CD8-positive, alpha-beta T cell (primary cell): ENCODE measurements at regions of chr18 and their contacts with region 1.

Region 1: DNA sequence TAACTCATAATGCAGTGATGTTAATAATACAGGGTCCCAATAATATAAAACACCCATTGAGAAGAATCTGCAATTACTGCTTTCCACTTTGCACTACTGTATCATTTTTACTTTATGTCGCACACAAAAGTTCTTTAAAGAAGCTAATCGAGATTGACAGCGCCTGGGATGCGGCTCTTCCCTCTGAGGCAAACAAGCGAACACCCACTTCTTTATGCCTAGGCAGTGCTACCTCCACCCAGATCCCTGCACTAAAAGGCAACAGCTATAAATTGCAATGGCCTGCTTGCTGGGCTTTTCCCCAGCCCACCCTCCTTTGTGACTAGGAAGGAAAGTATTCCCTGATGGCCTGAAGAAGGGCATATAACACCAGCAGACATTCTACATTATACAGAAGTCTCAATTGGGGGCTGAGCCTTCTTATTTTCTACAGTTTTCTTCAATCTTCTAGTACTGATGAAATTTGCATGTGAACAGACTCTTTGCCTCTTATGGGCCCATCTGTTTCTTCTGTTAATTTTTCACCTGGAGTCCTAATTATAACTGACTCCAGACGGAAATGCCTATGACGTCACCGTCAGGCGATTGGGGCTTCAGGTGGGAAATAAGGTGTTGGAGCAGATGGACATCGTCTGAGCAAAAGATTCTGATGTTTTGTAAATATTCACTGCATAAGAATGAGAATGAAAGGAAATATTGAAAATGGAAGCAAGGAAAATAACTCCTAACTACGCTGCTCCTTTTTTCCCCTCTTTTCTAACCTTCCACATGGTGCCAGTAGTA is 138.9 kb upstream of the DCC start:
- DNase-seq: no peak
- ATAC-seq: no peak
- H3K4me3 ChIP-seq: no peak overlapping the region
- H3K4me3 Mint-ChIP-seq: no peak overlapping the region
- H3K27ac ChIP-seq: no peak overlapping the region
- H3K27ac Mint-ChIP-seq: no peak overlapping the region
- H3K4me1 ChIP-seq: no peaks in the 10 kb centered on the region
- H3K4me1 Mint-ChIP-seq: no peaks in the 10 kb centered on the region
- H3K27me3 ChIP-seq: no peaks in the 10 kb centered on the region
- H3K27me3 Mint-ChIP-seq: no peaks in the 10 kb centered on the region
- CTCF ChIP-seq: no peak

Region 2: GRCh38 chr18:52219102-52219501 is 18.0 kb after region 1 on chr18:
- CTCF ChIA-PET with region 1: no interaction called
- POLR2A ChIA-PET with region 1: no interaction called
- intact Hi-C with region 1: loop called in 1 of 2 experiments (anchors 1 kb)
- DNase-seq: no peak
- ATAC-seq: no peak
- H3K4me3 ChIP-seq: no peak overlapping the region
- H3K4me3 Mint-ChIP-seq: no peak overlapping the region
- H3K27ac ChIP-seq: no peak overlapping the region
- H3K27ac Mint-ChIP-seq: no peak overlapping the region
- H3K4me1 ChIP-seq: no peaks in the 10 kb centered on the region
- H3K4me1 Mint-ChIP-seq: no peaks in the 10 kb centered on the region
- H3K27me3 ChIP-seq: no peaks in the 10 kb centered on the region
- H3K27me3 Mint-ChIP-seq: no peaks in the 10 kb centered on the region
- CTCF ChIP-seq: no peak

Region 3: GRCh38 chr18:52312321-52312720 is 111.2 kb after region 1 on chr18:
- CTCF ChIA-PET with region 1: no interaction called
- POLR2A ChIA-PET with region 1: no interaction called
- intact Hi-C with region 1: no loop called
- DNase-seq: no peak
- ATAC-seq: no peak
- H3K4me3 ChIP-seq: no peak overlapping the region
- H3K4me3 Mint-ChIP-seq: no peak overlapping the region
- H3K27ac ChIP-seq: no peak overlapping the region
- H3K27ac Mint-ChIP-seq: no peak overlapping the region
- H3K4me1 ChIP-seq: no peaks in the 10 kb centered on the region
- H3K4me1 Mint-ChIP-seq: no peaks in the 10 kb centered on the region
- H3K27me3 ChIP-seq: no peaks in the 10 kb centered on the region
- H3K27me3 Mint-ChIP-seq: no peaks in the 10 kb centered on the region
- CTCF ChIP-seq: no peak